ENCODE measurements at regions of chr1 and their contacts with region 1.

Region 1: GRCh38 chr1:26169669-26170471 is at the start of gene ZNF593:
- DNase-seq: peak; percentile 74 to 81 (median 77)
- H3K4me3 ChIP-seq: peak within 1 kb of the TSS; percentile 52 to 90
- H3K4me3 Mint-ChIP-seq: peak within 1 kb of the TSS; percentile 83 to 91 (median 88)
- H3K27ac ChIP-seq: peak within 1 kb of the TSS; percentile 85
- H3K27ac Mint-ChIP-seq: peak within 1 kb of the TSS; percentile 71 to 94 (median 93)
- H3K4me1 ChIP-seq: peaks cover 20% of the 10 kb centered on the region
- H3K4me1 Mint-ChIP-seq: peaks cover 4 to 25% (median 16%) of the 10 kb centered on the region in 4 donors
- H3K27me3 ChIP-seq: no peaks in the 10 kb centered on the region
- H3K27me3 Mint-ChIP-seq: no peaks in the 10 kb centered on the region
- total RNA-seq, gene ZNF593: 10.7 to 12.4 TPM

Region 2: DNA sequence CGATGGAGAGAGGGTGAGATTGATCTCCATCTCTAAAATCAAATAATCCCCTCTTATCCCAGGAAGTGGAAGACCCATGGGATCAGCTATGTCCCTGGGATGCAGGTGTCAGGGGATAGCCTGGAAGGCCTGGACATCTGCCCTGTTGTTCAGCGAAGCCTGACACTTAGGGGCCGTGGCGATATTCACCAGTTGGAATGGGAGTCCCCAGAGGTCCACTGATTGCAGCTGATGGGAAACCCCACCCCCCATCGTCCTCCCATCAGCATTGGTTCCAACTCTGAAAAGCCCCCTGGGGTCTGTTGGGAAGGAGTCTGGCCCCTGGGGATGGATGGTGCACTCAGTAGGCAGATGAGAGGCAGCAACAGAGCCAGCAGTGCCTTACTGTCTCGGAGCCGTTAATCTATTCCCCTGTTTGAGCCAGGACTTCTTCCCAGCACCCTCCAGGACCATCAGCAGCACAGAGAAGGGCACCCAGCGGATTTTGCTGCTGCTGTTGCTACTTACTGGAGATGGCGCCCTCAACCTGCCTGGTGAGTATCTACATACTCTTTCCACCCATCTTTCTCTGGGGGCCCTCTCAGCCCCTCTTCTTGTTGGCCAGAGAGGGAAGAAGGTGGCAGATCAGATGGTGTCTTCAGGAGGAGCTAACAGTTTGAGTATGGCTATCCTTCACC is 33.9 kb after region 1 on chr1:
- CTCF ChIA-PET with region 1: interaction called, 11 read pairs
- POLR2A ChIA-PET with region 1: interaction called, 9 read pairs
- intact Hi-C with region 1: no loop called
- DNase-seq: no peak
- H3K4me3 ChIP-seq: no peak overlapping the region
- H3K4me3 Mint-ChIP-seq: no peak overlapping the region
- H3K27ac ChIP-seq: no peak overlapping the region
- H3K27ac Mint-ChIP-seq: peak overlapping the region in 5 of 7 donors; percentile 1 to 98 (median 76)
- H3K4me1 ChIP-seq: peaks cover 32% of the 10 kb centered on the region
- H3K4me1 Mint-ChIP-seq: peaks cover 30 to 46% (median 37%) of the 10 kb centered on the region in 4 donors
- H3K27me3 ChIP-seq: no peaks in the 10 kb centered on the region
- H3K27me3 Mint-ChIP-seq: no peaks in the 10 kb centered on the region